ENCODE measurements at regions of chr7 and their contacts with region 1.

Region 1: DNA sequence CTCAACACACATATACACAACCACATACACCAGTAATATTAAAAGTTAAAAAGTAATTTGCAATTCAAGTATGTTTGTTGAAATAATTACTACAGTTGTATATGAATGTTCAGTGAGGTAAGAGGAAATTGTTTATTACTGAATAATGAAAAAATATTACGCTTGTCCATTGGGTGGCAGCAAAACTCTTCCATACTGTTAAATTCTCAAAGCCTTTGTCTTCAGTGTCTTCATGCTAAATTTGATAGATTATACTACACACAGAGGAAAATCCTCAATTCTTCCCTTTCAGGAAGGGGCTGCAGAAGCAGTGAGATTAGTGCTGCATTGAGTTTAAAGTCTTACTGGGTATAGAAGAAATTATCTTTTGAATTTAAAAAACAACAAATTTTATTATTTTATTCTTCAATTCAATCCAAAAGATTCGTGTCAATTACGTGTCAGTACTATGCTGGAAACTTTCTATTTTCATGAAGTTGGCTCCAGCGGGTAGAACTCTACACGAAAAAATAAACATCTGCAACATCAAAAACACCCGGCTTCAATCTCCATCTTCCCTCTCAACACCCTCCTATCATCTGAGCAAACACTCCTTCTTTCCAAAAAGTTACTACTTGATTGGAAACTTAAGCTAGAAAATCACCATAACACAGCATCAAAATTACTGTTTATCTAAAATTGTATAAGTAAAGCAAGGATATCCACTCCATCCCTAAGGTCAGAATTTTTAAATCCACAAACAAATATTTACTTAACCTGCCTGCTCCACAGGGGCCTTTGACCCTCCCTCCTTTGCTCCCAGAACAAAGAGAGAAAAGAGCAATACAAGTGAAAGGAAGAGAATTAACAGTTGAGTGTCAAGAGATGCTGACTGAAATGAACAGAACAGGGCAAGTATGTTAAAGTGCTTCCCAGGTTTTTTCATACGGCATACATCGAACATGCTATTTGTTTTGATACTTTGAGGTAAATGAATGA is 37.0 kb upstream of the TES start:
- DNase-seq: peak; percentile 38
- H3K4me3 ChIP-seq: no peak overlapping the region
- H3K27ac ChIP-seq: no peak overlapping the region
- H3K4me1 ChIP-seq: peaks cover 0 to 6% of the 10 kb centered on the region in 2 experiments; a peak in 1 of 4 replicates
- H3K27me3 ChIP-seq: peaks cover 19% of the 10 kb centered on the region
- CTCF ChIP-seq: peak; percentile 86
- EP300 ChIP-seq: no peak
- RAD21 ChIP-seq: peak; percentile 97

Region 2: DNA sequence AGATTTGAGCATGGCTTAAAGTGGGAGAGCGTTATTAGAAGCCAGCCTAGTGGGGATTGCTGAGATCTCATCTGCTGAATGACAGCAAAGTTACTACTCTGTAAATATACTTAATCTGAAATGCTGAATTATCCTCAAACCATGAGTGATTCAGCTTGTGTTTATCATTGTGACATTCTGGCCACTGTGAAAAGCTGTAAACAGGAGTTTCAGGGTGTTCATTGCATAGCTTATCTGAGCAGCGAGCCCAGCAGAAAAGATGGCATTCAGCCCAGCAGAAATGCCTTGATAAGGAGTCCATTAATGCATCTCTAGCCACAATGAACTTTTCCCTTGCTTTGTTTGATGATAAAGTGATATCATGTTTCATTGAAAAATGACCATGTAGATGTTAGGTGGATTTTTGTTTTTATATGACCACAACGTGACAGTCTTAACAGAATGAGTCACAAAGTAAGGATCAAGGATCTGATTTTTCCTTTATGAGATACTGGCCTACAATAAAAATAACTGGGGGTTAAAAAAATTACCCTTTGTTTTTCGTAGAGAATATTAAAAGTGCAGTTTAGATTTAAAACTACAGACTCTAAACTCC is 44.8 kb after region 1 on chr7:
- CTCF ChIA-PET with region 1: no interaction called
- POLR2A ChIA-PET with region 1: no interaction called
- DNase-seq: peak; percentile 58
- H3K4me3 ChIP-seq: 0 out of 4 replicates have a peak overlapping the region, but pooled peaks of 1 of the 2 experiments have one; percentile 9
- H3K27ac ChIP-seq: peak overlapping the region; percentile 47 to 99
- H3K4me1 ChIP-seq: peaks cover 9 to 67% of the 10 kb centered on the region in 2 experiments; a peak in 3 of 4 replicates
- H3K27me3 ChIP-seq: peaks cover 10% of the 10 kb centered on the region; the same call in 1 of the 2 replicates
- CTCF ChIP-seq: no peak
- EP300 ChIP-seq: peak; percentile 92 to 97
- RAD21 ChIP-seq: peak; percentile 36; the same call in 1 of the 2 replicates

Region 3: GRCh38 chr7:116548506-116548905 is 375.2 kb after region 1 on chr7:
- CTCF ChIA-PET with region 1: no interaction called
- POLR2A ChIA-PET with region 1: no interaction called
- DNase-seq: no peak
- H3K4me3 ChIP-seq: no peak overlapping the region
- H3K27ac ChIP-seq: peak overlapping the region in 1 of 2 experiments; percentile 79; a peak in 1 of 4 replicates
- H3K4me1 ChIP-seq: peaks cover 0 to 82% of the 10 kb centered on the region in 2 experiments; a peak in 3 of 4 replicates
- H3K27me3 ChIP-seq: no peaks in the 10 kb centered on the region
- CTCF ChIP-seq: no peak
- EP300 ChIP-seq: no peak
- RAD21 ChIP-seq: no peak

Region 4: GRCh38 chr7:116582806-116583444 is 409.6 kb after region 1 on chr7:
- CTCF ChIA-PET with region 1: interaction called, 50 read pairs
- POLR2A ChIA-PET with region 1: no interaction called
- DNase-seq: no peak
- H3K4me3 ChIP-seq: no peak overlapping the region; a peak in 1 of 4 replicates
- H3K27ac ChIP-seq: peak overlapping the region; percentile 48 to 93; a peak in 3 of 4 replicates
- H3K4me1 ChIP-seq: peaks cover 0 to 28% of the 10 kb centered on the region in 2 experiments; a peak in 2 of 4 replicates
- H3K27me3 ChIP-seq: no peaks in the 10 kb centered on the region
- CTCF ChIP-seq: no peak
- EP300 ChIP-seq: no peak
- RAD21 ChIP-seq: no peak